H1 (cell line): ENCODE measurements at regions of chr3 and their contacts with region 1.

Region 1: DNA sequence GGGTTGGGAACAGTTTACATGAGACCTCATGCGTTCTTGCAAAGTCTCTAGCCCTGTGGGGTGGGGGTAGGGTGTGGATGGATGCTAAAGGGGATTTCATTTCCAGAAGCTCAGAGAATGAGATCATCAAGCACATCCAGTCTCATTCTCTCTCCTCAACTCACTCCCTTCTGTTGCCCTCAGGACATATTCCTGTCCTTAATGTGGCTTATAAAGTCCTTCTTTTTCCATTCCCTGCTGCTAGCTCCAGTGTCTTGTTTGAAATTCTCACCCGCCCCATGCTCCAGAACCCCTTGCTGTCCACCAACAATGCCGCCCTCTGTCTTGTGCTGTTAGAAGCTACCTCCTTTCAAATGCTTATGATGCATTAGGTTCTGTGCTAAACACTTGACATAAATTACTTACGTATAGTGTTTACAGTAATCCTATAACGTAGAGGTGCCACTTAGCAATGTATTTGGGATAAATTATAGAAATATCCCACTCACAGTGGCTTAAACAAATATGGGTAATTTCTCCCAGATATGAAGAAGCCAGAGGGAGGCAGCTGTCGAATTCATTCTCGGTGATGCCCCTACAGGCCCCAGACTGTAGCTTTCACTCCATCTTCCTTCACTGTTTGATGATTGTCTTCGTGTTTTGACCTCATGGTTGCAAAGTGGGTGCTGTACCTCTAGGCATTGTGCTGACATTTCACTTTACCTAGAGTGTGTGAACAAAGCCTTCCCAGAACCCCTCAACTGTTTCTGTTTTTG is 273.1 kb upstream of the TBL1XR1 start:
- DNase-seq: no peak
- H3K4me3 ChIP-seq: no peak overlapping the region
- H3K27ac ChIP-seq: no peak overlapping the region
- H3K4me1 ChIP-seq: peaks cover 0 to 5% (median 1%) of the 10 kb centered on the region in 4 experiments; a peak in 1 of 7 replicates
- H3K27me3 ChIP-seq: no peaks in the 10 kb centered on the region
- CTCF ChIP-seq: no peak
- EP300 ChIP-seq: no peak
- POLR2A ChIP-seq: no peak
- RAD21 ChIP-seq: peak in 1 of 2 experiments; percentile 14; a peak in 2 of 4 replicates

Region 2: DNA sequence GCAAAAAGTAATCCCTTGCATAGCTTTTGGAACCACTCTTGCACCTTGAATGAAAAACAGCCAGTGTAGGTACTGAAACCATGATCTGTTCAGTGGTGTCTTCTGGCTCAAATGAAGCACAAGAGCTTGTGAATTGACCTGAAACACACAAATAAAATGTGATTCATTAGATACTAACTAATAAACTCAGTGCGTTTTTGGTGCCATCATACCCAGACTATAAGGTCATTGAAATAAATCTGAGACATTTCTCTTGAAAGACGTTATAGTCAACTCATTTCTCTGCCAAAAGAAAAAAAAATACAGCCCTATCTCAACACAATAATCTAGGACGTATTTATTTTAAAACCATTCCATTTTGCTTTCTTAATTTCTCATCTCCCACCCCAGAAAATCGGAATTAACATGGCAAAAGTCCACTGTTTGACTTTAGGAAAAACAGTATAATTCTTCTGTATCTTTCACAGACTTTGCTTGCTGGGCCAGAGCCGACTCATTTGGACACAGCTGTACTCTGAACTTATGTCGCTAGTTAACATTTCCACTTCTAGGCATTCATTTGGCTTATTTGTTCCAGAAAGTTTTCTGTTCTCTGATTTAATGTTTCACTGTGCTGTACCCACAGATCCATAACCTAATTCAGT is 11.8 kb after region 1 on chr3:
- CTCF ChIA-PET with region 1: interaction called, 14 read pairs
- POLR2A ChIA-PET with region 1: no interaction called
- DNase-seq: no peak
- H3K4me3 ChIP-seq: no peak overlapping the region
- H3K27ac ChIP-seq: no peak overlapping the region
- H3K4me1 ChIP-seq: no peaks in the 10 kb centered on the region
- H3K27me3 ChIP-seq: no peaks in the 10 kb centered on the region
- CTCF ChIP-seq: no peak
- EP300 ChIP-seq: no peak
- POLR2A ChIP-seq: no peak
- RAD21 ChIP-seq: no peak

Region 3: GRCh38 chr3:177525987-177526712 is 55.8 kb after region 1 on chr3:
- CTCF ChIA-PET with region 1: no interaction called
- POLR2A ChIA-PET with region 1: no interaction called
- DNase-seq: no peak
- H3K4me3 ChIP-seq: no peak overlapping the region
- H3K27ac ChIP-seq: no peak overlapping the region
- H3K4me1 ChIP-seq: peaks cover 0 to 3% (median 0%) of the 10 kb centered on the region in 4 experiments; a peak in 1 of 7 replicates
- H3K27me3 ChIP-seq: peaks cover 0 to 2% (median 0%) of the 10 kb centered on the region in 4 experiments; a peak in 1 of 7 replicates
- CTCF ChIP-seq: no peak
- EP300 ChIP-seq: no peak
- POLR2A ChIP-seq: no peak
- RAD21 ChIP-seq: no peak